ENCODE measurements at regions of chr14 and their contacts with region 1.

Region 1: DNA sequence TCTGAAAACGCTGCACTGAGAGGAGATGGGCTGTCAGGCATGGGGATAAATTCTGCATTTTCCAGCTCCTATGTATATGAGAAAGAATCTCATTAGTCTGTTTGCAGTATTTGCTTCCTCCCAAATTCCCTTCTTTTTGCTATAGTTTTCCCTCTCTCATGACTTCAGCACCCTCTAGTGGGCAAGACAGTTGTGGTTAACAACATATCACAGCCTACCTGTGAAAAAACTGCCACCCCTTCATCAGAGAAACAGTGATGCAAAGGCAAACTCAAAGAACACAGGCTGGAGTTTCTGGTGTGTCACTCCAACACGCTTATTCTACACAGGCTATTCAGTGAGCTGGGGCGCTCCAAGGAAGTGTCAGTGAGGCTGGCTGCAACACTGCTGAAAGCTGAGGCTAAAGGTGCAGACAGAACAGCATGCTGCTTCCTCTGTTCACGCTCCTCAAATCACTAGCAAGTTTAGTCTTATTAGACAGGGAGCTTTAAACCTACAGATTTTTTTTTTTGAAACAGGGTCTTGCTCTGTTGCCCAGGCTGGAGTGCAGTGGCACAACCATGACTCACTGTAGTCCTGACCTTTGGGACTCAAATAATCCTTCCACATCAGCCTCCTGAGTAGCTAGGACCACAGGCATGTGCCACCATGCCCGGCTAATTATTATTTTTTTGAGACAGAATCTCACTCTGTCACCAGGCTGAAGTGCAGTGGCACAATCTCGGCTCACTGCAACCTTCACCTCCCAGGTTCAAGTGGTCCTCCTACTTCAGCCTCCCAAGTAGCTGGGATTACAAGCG is 19.3 kb downstream of the ZC2HC1C start:
- DNase-seq: peak; percentile 23
- H3K4me3 Mint-ChIP-seq: no peak overlapping the region
- H3K27ac Mint-ChIP-seq: no peak overlapping the region
- H3K4me1 Mint-ChIP-seq: no peaks in the 10 kb centered on the region
- H3K27me3 Mint-ChIP-seq: no peaks in the 10 kb centered on the region

Region 2: DNA sequence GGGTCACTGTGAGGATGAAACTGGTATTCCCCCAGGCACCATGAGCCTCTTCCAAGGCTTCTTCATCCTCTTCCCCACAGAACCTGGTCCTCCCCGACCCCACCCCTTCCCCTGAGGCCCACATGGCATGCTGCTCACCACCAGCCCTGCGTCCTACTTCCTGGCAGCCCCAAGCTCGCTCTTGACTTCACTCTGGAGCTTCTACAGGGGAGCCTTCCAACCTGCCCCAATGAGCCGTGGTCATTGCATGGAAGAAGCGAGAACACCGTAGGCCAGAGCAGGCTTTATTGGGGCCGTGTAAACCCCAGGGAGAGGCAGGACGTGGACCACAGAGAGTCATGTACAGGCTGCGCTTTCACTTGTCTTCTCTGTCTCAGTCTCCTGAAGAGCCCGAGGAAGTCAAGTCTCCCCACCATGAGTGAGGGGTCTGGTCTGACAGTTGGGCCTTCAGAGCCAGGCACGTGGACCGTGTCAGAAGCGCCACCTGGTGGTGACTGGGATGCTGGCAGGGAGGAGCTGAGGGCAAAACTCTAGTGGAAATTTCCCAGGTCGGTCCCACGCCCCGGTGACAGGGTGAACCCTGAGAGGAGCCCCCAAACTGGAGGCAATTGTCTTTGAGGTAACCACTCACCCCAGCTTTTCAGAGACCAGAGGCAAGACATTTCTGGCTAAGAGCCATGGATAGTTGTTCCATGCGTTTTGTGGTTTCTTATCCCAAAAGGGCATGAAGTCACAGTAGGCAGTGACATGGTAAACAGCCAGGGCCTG is 183.2 kb before region 1 on chr14:
- CTCF ChIA-PET with region 1: interaction called, 25 read pairs
- POLR2A ChIA-PET with region 1: no interaction called
- intact Hi-C with region 1: no loop called
- DNase-seq: peak; percentile 83
- H3K4me3 Mint-ChIP-seq: no peak overlapping the region
- H3K27ac Mint-ChIP-seq: peak overlapping the region; percentile 8
- H3K4me1 Mint-ChIP-seq: no peaks in the 10 kb centered on the region
- H3K27me3 Mint-ChIP-seq: no peaks in the 10 kb centered on the region

Region 3: GRCh38 chr14:74922739-74923401 is 165.9 kb before region 1 on chr14 and contains the start of gene RPS6KL1:
- CTCF ChIA-PET with region 1: interaction called, 16 read pairs
- POLR2A ChIA-PET with region 1: no interaction called
- intact Hi-C with region 1: no loop called
- DNase-seq: peak; percentile 82
- H3K4me3 Mint-ChIP-seq: peak within 1 kb of the TSS; percentile 57
- H3K27ac Mint-ChIP-seq: no peak within 1 kb of the TSS
- H3K4me1 Mint-ChIP-seq: peaks cover 8% of the 10 kb centered on the region
- H3K27me3 Mint-ChIP-seq: peaks cover 7% of the 10 kb centered on the region
- total RNA-seq, gene RPS6KL1: 4.2 to 4.9 TPM

Region 4: GRCh38 chr14:74945823-74946682 is 142.7 kb before region 1 on chr14:
- CTCF ChIA-PET with region 1: interaction called, 71 read pairs
- POLR2A ChIA-PET with region 1: no interaction called
- intact Hi-C with region 1: loop called (anchors 1 kb)
- DNase-seq: peak; percentile 84
- H3K4me3 Mint-ChIP-seq: no peak overlapping the region
- H3K27ac Mint-ChIP-seq: no peak overlapping the region
- H3K4me1 Mint-ChIP-seq: peaks cover 25% of the 10 kb centered on the region
- H3K27me3 Mint-ChIP-seq: no peaks in the 10 kb centered on the region

Region 5: GRCh38 chr14:75063407-75064213 is 25.2 kb before region 1 on chr14 and contains the start of gene ACYP1:
- CTCF ChIA-PET with region 1: interaction called, 25 read pairs
- POLR2A ChIA-PET with region 1: no interaction called
- intact Hi-C with region 1: no loop called
- DNase-seq: peak; percentile 96
- H3K4me3 Mint-ChIP-seq: peak within 1 kb of the TSS; percentile 99
- H3K27ac Mint-ChIP-seq: peak within 1 kb of the TSS; percentile 95
- H3K4me1 Mint-ChIP-seq: peaks cover 37% of the 10 kb centered on the region
- H3K27me3 Mint-ChIP-seq: no peaks in the 10 kb centered on the region
- total RNA-seq, gene ACYP1: 41.3 to 45.8 TPM

Region 6: GRCh38 chr14:75077794-75078193 is 11.0 kb before region 1 on chr14:
- CTCF ChIA-PET with region 1: interaction called, 14 read pairs
- POLR2A ChIA-PET with region 1: no interaction called
- intact Hi-C with region 1: no loop called
- DNase-seq: no peak
- H3K4me3 Mint-ChIP-seq: no peak overlapping the region
- H3K27ac Mint-ChIP-seq: no peak overlapping the region
- H3K4me1 Mint-ChIP-seq: no peaks in the 10 kb centered on the region
- H3K27me3 Mint-ChIP-seq: no peaks in the 10 kb centered on the region

Region 7: GRCh38 chr14:75101491-75101890 is 12.7 kb after region 1 on chr14:
- CTCF ChIA-PET with region 1: interaction called, 16 read pairs
- POLR2A ChIA-PET with region 1: no interaction called
- intact Hi-C with region 1: no loop called
- DNase-seq: no peak
- H3K4me3 Mint-ChIP-seq: no peak overlapping the region
- H3K27ac Mint-ChIP-seq: no peak overlapping the region
- H3K4me1 Mint-ChIP-seq: no peaks in the 10 kb centered on the region
- H3K27me3 Mint-ChIP-seq: no peaks in the 10 kb centered on the region